Activated CD4-positive, alpha-beta T cell treated with anti-CD3 and anti-CD28 coated beads for 36 hours (primary cell): ENCODE measurements at regions of chr6 and their contacts with region 1.

Region 1: DNA sequence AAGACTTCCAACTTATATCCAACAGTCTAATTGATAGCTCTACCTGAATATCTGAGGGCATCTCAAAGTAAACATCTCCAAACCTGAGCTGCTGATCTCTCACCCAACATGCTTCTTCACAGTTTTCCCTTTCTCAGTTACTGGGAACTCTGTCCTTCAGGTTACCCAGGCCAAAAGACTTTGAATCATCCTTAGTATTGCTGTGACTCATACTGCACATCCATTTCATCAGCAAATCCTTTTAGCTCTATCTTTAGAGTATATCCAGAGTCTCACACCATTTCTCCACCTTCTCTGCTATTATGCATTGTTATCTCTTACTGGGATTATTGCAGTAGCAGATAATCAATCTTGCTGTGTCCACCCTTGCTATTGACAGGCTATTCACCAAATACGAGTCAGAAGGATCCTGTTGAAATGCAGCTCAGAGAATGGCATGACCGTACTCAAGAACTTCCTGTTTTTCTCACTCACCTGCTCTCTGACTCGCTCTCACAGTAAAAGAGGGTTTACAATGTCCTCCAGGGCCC is 57.3 kb downstream of the BCKDHB start:
- DNase-seq: peak; percentile 13
- ATAC-seq: peak; percentile 80
- H3K4me3 Mint-ChIP-seq: no peak overlapping the region
- H3K27ac Mint-ChIP-seq: no peak overlapping the region
- H3K4me1 Mint-ChIP-seq: peaks cover 2% of the 10 kb centered on the region
- H3K27me3 Mint-ChIP-seq: no peaks in the 10 kb centered on the region

Region 2: DNA sequence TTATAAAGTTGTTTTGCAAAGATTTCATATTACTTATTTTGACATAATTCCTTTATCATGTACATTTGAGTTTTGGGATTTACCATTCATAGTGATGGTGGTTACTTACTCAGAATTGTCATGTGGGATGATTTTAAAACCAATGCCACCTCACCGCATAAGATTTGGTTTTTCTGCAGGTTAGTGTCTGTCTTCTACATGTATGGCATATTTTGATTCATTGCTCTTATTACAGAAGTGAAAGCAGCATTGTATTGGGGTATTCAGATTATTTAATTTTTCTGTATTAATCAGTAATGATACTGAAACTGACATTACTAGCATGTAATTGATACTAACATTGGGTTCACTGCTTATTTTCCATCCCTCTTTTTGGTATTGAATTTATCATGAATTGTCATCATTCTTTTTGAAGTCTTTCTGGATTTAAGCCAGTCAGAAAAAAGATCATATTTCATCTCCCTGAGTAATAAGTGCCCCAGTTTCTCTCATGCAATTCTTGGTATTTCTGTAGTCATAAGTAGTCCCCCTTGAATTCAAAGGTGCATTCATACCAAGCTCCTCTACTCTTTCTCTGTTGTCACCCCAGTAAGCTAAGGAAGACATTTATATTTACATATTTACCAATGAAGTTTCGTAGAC is 119.3 kb after region 1 on chr6:
- CTCF ChIA-PET with region 1: no interaction called
- POLR2A ChIA-PET with region 1: interaction called, 3 read pairs
- intact Hi-C with region 1: loop called in 1 of 2 experiments (anchors 2 kb)
- DNase-seq: peak; percentile 8
- ATAC-seq: peak; percentile 73
- H3K4me3 Mint-ChIP-seq: no peak overlapping the region
- H3K27ac Mint-ChIP-seq: no peak overlapping the region
- H3K4me1 Mint-ChIP-seq: peaks cover 20% of the 10 kb centered on the region
- H3K27me3 Mint-ChIP-seq: no peaks in the 10 kb centered on the region

Region 3: GRCh38 chr6:81241126-81242041 is 1077.7 kb after region 1 on chr6:
- CTCF ChIA-PET with region 1: no interaction called
- POLR2A ChIA-PET with region 1: no interaction called
- intact Hi-C with region 1: no loop called
- DNase-seq: no peak
- ATAC-seq: no peak
- H3K4me3 Mint-ChIP-seq: no peak overlapping the region
- H3K27ac Mint-ChIP-seq: no peak overlapping the region
- H3K4me1 Mint-ChIP-seq: no peaks in the 10 kb centered on the region
- H3K27me3 Mint-ChIP-seq: no peaks in the 10 kb centered on the region